Naive thymus-derived CD4-positive, alpha-beta T cell (primary cell): ENCODE measurements at regions of chr1 and their contacts with region 1.

Region 1: GRCh38 chr1:92340154-92340553 is 41.3 kb downstream of the RPAP2 start:
- DNase-seq: no peak
- ATAC-seq: no peak
- H3K4me3 ChIP-seq: no peak overlapping the region
- H3K4me3 Mint-ChIP-seq: no peak overlapping the region
- H3K27ac ChIP-seq: no peak overlapping the region
- H3K27ac Mint-ChIP-seq: no peak overlapping the region
- H3K4me1 ChIP-seq: no peaks in the 10 kb centered on the region
- H3K4me1 Mint-ChIP-seq: peaks cover 0 to 10% (median 0%) of the 10 kb centered on the region in 7 donors
- H3K27me3 ChIP-seq: no peaks in the 10 kb centered on the region
- H3K27me3 Mint-ChIP-seq: no peaks in the 10 kb centered on the region

Region 2: GRCh38 chr1:92359986-92360385 is 19.8 kb after region 1 on chr1:
- CTCF ChIA-PET with region 1: interaction called, 3 read pairs
- POLR2A ChIA-PET with region 1: no interaction called
- intact Hi-C with region 1: loop called in 1 of 2 experiments (anchors 2 kb)
- DNase-seq: no peak
- ATAC-seq: no peak
- H3K4me3 ChIP-seq: no peak overlapping the region
- H3K4me3 Mint-ChIP-seq: no peak overlapping the region
- H3K27ac ChIP-seq: no peak overlapping the region
- H3K27ac Mint-ChIP-seq: no peak overlapping the region
- H3K4me1 ChIP-seq: peaks cover 0 to 4% of the 10 kb centered on the region in 2 donors
- H3K4me1 Mint-ChIP-seq: peaks cover 3 to 33% (median 22%) of the 10 kb centered on the region in 7 donors
- H3K27me3 ChIP-seq: no peaks in the 10 kb centered on the region
- H3K27me3 Mint-ChIP-seq: no peaks in the 10 kb centered on the region

Region 3: GRCh38 chr1:93977598-93977945 is 1637.4 kb after region 1 on chr1:
- CTCF ChIA-PET with region 1: no interaction called
- POLR2A ChIA-PET with region 1: no interaction called
- intact Hi-C with region 1: no loop called
- DNase-seq: no peak
- ATAC-seq: no peak
- H3K4me3 ChIP-seq: no peak overlapping the region
- H3K4me3 Mint-ChIP-seq: no peak overlapping the region
- H3K27ac ChIP-seq: no peak overlapping the region
- H3K27ac Mint-ChIP-seq: no peak overlapping the region
- H3K4me1 ChIP-seq: no peaks in the 10 kb centered on the region
- H3K4me1 Mint-ChIP-seq: peaks cover 0 to 2% (median 0%) of the 10 kb centered on the region in 7 donors
- H3K27me3 ChIP-seq: no peaks in the 10 kb centered on the region
- H3K27me3 Mint-ChIP-seq: peaks cover 0 to 6% (median 0%) of the 10 kb centered on the region in 5 donors